ENCODE measurements at regions of chr18 and their contacts with region 1.

Region 1: DNA sequence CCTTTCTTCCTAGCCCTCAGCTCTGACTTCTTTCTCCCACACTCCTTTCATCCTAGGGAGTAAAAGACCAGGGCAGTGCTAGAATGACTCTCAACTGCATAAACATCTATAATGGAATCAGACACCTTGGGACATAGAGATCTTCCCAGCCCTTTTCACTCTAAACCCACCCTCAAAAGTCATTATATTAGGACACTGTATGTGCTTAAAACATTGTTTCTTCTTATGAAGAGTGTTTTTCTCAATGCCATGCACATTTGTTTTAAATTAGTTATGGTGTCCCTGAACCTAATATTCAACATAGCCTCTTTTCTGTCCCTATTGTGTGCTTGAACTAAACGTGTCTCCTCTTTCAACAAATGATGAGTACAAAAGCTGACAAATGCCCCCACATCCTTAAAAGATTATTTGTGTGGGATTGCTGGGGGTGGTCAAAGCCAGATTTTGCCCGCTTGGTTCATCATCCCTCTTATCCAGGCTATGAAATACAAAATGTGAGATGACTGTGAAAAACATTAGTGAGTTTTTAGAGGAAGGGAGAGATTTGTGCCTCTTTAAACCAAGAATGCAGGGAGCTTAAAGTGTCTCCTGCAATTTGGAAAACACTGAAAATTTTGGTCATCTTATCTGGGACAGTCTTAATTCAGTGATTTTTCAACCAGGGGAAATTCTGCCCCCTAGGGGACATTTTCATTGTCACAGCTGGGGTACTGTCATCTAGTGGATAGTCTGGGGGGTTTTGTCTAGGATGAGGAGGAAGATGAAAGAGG is 29.0 kb downstream of the SERPINB5 start:
- DNase-seq: no peak
- H3K4me3 ChIP-seq: no peak overlapping the region
- H3K27me3 ChIP-seq: no peaks in the 10 kb centered on the region; the same call in 1 of the 2 replicates
- CTCF ChIP-seq: peak; percentile 67

Region 2: DNA sequence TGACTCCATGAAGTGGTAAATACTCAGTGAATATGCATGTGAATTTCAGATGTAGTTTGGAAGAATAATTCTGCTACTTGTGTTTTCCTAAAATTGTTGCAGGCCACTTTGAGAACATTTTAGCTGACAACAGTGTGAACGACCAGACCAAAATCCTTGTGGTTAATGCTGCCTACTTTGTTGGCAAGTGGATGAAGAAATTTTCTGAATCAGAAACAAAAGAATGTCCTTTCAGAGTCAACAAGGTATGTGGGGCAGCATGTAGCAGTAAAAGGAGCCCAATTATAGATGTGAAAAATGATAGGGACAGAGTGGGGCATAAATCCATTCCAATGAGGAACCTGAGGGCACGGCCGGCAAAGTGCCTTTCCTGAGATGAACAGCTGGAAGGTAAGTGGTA is 12.9 kb before region 1 on chr18:
- CTCF ChIA-PET with region 1: interaction called, 23 read pairs
- POLR2A ChIA-PET with region 1: no interaction called
- DNase-seq: no peak
- H3K4me3 ChIP-seq: no peak overlapping the region
- H3K27me3 ChIP-seq: peaks cover 3% of the 10 kb centered on the region; the same call in 1 of the 2 replicates
- CTCF ChIP-seq: no peak

Measured in BJ (cell line).